MCF 10A (cell line): ENCODE measurements at regions of chr6 and their contacts with region 1.

Region 1: DNA sequence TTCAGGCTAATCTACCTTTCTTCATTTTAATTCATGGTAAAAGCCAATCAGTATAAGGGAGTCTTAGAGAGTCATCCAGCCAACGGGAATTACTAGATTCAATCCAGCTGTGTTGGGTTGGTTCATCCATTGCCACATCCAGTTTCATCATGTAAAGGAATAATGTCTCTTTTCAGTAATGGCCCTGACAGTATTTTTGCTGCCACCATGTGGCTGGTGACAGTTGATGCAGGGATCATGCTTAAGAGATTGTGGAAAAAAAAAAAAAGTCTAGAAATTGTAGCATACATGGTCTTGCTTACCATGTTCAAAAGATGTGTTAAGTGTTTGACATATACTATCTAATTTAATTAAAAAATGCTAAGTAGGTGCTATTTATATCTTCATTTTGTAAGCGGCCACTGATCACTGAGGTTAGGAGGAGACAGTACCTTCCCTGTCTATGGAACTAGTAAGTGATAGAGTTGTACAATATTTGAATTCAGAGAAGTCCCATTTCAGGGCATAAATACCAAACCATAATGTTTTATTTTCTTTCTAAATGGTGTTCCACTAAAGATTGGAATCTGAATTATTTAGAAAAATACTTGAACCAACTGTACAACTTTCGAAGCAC is 135.9 kb downstream of the KHDRBS2 start:
- DNase-seq: peak; percentile 73
- H3K4me3 Mint-ChIP-seq: no peak overlapping the region
- H3K27ac Mint-ChIP-seq: no peak overlapping the region
- H3K4me1 Mint-ChIP-seq: no peaks in the 10 kb centered on the region
- H3K27me3 Mint-ChIP-seq: peaks cover 13% of the 10 kb centered on the region
- CTCF ChIP-seq: peak; percentile 66

Region 2: GRCh38 chr6:61711849-61712248 is 438.3 kb before region 1 on chr6:
- CTCF ChIA-PET with region 1: no interaction called
- POLR2A ChIA-PET with region 1: no interaction called
- intact Hi-C with region 1: loop called (anchors 1 kb)
- DNase-seq: peak; percentile 0
- H3K4me3 Mint-ChIP-seq: no peak overlapping the region
- H3K27ac Mint-ChIP-seq: no peak overlapping the region
- H3K4me1 Mint-ChIP-seq: no peaks in the 10 kb centered on the region
- H3K27me3 Mint-ChIP-seq: no peaks in the 10 kb centered on the region
- CTCF ChIP-seq: peak; percentile 24

Region 3: DNA sequence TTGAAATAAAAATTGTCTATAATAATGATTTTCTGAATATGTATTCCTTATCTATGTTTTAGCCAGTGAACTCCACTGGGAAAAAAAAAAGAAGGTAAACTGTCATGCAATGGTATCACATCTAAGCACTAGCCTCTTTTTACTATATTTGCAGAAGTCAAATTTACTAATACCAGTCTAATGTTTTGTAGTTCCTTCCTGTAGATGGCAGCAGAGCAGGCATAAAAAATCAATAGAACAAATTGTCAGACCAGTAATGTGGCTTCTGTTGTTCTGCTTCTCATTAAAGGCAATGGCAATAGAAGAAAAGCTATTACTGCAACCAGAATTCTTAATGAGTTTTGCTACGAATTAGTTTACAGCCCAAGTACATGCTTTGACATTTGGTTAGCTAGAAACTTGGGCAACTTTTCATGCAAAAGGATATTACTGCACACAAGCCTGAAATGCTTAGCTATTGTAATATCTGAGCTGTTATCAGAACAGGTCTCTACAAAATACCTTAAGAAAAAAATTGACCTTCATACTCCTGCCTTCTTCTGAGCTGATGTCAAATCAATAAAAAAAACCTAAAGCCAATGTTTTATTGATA is 341.1 kb before region 1 on chr6:
- CTCF ChIA-PET with region 1: interaction called, 17 read pairs
- POLR2A ChIA-PET with region 1: no interaction called
- intact Hi-C with region 1: loop called (anchors 1 kb)
- DNase-seq: peak; percentile 49
- H3K4me3 Mint-ChIP-seq: no peak overlapping the region
- H3K27ac Mint-ChIP-seq: no peak overlapping the region
- H3K4me1 Mint-ChIP-seq: no peaks in the 10 kb centered on the region
- H3K27me3 Mint-ChIP-seq: no peaks in the 10 kb centered on the region
- CTCF ChIP-seq: peak; percentile 44

Region 4: GRCh38 chr6:61886608-61887259 is 263.4 kb before region 1 on chr6:
- CTCF ChIA-PET with region 1: interaction called, 30 read pairs
- POLR2A ChIA-PET with region 1: no interaction called
- intact Hi-C with region 1: loop called (anchors 1 kb)
- DNase-seq: peak; percentile 14
- H3K4me3 Mint-ChIP-seq: no peak overlapping the region
- H3K27ac Mint-ChIP-seq: no peak overlapping the region
- H3K4me1 Mint-ChIP-seq: no peaks in the 10 kb centered on the region
- H3K27me3 Mint-ChIP-seq: peaks cover 50% of the 10 kb centered on the region
- CTCF ChIP-seq: no peak

Region 5: GRCh38 chr6:62129127-62129526 is 21.0 kb before region 1 on chr6:
- CTCF ChIA-PET with region 1: interaction called, 11 read pairs
- POLR2A ChIA-PET with region 1: no interaction called
- intact Hi-C with region 1: no loop called
- DNase-seq: no peak
- H3K4me3 Mint-ChIP-seq: no peak overlapping the region
- H3K27ac Mint-ChIP-seq: no peak overlapping the region
- H3K4me1 Mint-ChIP-seq: no peaks in the 10 kb centered on the region
- H3K27me3 Mint-ChIP-seq: no peaks in the 10 kb centered on the region
- CTCF ChIP-seq: no peak